Endothelial cell of umbilical vein (primary cell): ENCODE measurements at regions of chr20 and their contacts with region 1.

Region 1: GRCh38 chr20:8049310-8049709 is 29.7 kb upstream of the TMX4 start:
- DNase-seq: no peak
- H3K4me3 ChIP-seq: no peak overlapping the region
- H3K27ac ChIP-seq: no peak overlapping the region
- H3K4me1 ChIP-seq: peaks cover 43% of the 10 kb centered on the region
- H3K27me3 ChIP-seq: no peaks in the 10 kb centered on the region
- CTCF ChIP-seq: no peak
- POLR2A ChIP-seq: no peak

Region 2: GRCh38 chr20:8094415-8094818 is 45.1 kb after region 1 on chr20:
- CTCF ChIA-PET with region 1: interaction called, 3 read pairs
- POLR2A ChIA-PET with region 1: no interaction called
- dilution Hi-C with region 1: no loop called
- intact Hi-C with region 1: loop called (anchors 2 kb)
- DNase-seq: peak; percentile 87
- H3K4me3 ChIP-seq: no peak overlapping the region
- H3K27ac ChIP-seq: peak overlapping the region; percentile 94
- H3K4me1 ChIP-seq: peaks cover 25% of the 10 kb centered on the region
- H3K27me3 ChIP-seq: no peaks in the 10 kb centered on the region
- CTCF ChIP-seq: no peak
- POLR2A ChIP-seq: no peak

Region 3: GRCh38 chr20:8305449-8305978 is 256.2 kb after region 1 on chr20:
- CTCF ChIA-PET with region 1: no interaction called
- POLR2A ChIA-PET with region 1: no interaction called
- dilution Hi-C with region 1: no loop called
- intact Hi-C with region 1: loop called (anchors 5 kb)
- DNase-seq: peak; percentile 42
- H3K4me3 ChIP-seq: no peak overlapping the region
- H3K27ac ChIP-seq: no peak overlapping the region
- H3K4me1 ChIP-seq: no peaks in the 10 kb centered on the region
- H3K27me3 ChIP-seq: no peaks in the 10 kb centered on the region
- CTCF ChIP-seq: peak; percentile 67 to 79
- POLR2A ChIP-seq: no peak

Region 4: DNA sequence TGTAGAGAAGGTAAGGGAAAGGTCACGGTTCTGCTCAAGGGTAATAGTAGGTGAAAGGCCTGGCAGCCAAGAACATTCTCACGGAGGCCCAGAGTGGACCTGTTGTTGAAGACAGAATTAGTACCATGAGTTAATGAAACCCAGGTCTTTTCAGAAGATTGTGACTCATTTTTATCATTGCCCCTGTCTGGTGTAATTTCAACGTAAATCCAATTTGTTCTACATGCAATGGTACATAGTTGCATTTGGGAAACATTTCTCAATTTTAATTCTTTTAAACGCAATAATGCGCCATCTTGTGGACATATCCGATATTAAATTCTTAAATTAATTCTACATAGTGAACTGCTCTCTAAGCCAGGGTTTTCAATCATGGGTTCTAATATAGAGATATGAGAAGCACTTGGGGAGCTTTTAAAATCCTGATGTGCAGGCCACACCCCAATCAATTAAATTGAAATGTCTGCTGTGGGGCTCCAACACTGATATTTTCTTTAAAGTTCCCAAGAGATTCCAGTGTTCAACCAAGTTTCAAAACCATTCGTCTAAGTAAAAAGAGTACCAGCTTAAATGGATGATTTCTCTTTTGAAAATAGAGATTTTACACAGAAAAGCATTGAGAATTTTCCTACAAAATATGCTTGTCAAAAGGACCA is 340.2 kb after region 1 on chr20:
- CTCF ChIA-PET with region 1: interaction called, 57 read pairs
- POLR2A ChIA-PET with region 1: no interaction called
- dilution Hi-C with region 1: no loop called
- intact Hi-C with region 1: loop called (anchors 2 kb)
- DNase-seq: peak; percentile 61
- H3K4me3 ChIP-seq: no peak overlapping the region
- H3K27ac ChIP-seq: no peak overlapping the region
- H3K4me1 ChIP-seq: peaks cover 3% of the 10 kb centered on the region
- H3K27me3 ChIP-seq: no peaks in the 10 kb centered on the region
- CTCF ChIP-seq: peak; percentile 6 to 20
- POLR2A ChIP-seq: no peak

Region 5: GRCh38 chr20:8404912-8405635 is 355.8 kb after region 1 on chr20:
- CTCF ChIA-PET with region 1: no interaction called
- POLR2A ChIA-PET with region 1: no interaction called
- dilution Hi-C with region 1: no loop called
- intact Hi-C with region 1: no loop called
- DNase-seq: no peak
- H3K4me3 ChIP-seq: no peak overlapping the region
- H3K27ac ChIP-seq: no peak overlapping the region
- H3K4me1 ChIP-seq: no peaks in the 10 kb centered on the region
- H3K27me3 ChIP-seq: no peaks in the 10 kb centered on the region
- CTCF ChIP-seq: no peak
- POLR2A ChIP-seq: no peak